ENCODE measurements at regions of chr10 and their contacts with region 1.

Region 1: DNA sequence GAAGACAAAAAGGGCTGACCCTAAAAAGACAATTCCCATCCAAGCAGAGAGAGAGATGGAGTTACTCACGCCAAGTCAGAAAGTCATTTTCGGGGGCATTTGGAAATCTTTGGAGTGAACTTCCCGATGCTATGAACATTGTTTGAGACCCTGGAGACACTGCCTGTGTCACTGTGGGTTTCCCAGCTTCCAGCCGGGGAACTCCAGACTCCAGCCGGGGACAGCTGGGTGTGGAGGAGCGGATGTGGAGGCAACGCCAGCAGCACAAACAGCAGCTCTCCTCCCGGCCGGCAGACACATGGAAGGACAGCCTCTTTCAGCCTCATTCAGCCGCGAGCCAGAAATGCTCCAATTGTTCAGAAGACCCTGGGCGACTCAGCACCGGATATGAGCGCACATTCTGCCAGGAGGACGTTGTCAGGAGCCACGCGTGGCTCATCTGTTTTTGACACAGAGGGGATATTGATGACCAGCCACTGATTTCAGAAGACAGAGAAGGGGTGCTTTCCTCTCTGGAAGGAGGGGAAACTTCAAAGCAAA is 97.6 kb downstream of the PRPF18 start:
- DNase-seq: peak; percentile 93
- H3K4me3 ChIP-seq: no peak overlapping the region
- H3K27ac ChIP-seq: peak overlapping the region; percentile 100
- H3K4me1 ChIP-seq: peaks cover 47% of the 10 kb centered on the region
- H3K27me3 ChIP-seq: no peaks in the 10 kb centered on the region
- CTCF ChIP-seq: no peak
- POLR2A ChIP-seq: no peak

Region 2: GRCh38 chr10:13707156-13707881 is 23.0 kb after region 1 on chr10:
- CTCF ChIA-PET with region 1: interaction called, 9 read pairs
- POLR2A ChIA-PET with region 1: interaction called, 7 read pairs
- dilution Hi-C with region 1: no loop called
- intact Hi-C with region 1: loop called (anchors 1 kb)
- DNase-seq: peak; percentile 91
- H3K4me3 ChIP-seq: peak overlapping the region in 2 of 3 experiments; percentile 22 to 62
- H3K27ac ChIP-seq: peak overlapping the region; percentile 37
- H3K4me1 ChIP-seq: peaks cover 70% of the 10 kb centered on the region
- H3K27me3 ChIP-seq: no peaks in the 10 kb centered on the region
- CTCF ChIP-seq: peak in 1 of 2 donors; percentile 22
- POLR2A ChIP-seq: peak; percentile 42

Region 3: GRCh38 chr10:13712837-13713581 is 28.7 kb after region 1 on chr10:
- CTCF ChIA-PET with region 1: interaction called, 9 read pairs
- POLR2A ChIA-PET with region 1: interaction called, 7 read pairs
- dilution Hi-C with region 1: no loop called
- intact Hi-C with region 1: loop called (anchors 1 kb)
- DNase-seq: peak; percentile 96
- H3K4me3 ChIP-seq: no peak overlapping the region
- H3K27ac ChIP-seq: peak overlapping the region; percentile 92
- H3K4me1 ChIP-seq: peaks cover 43% of the 10 kb centered on the region
- H3K27me3 ChIP-seq: no peaks in the 10 kb centered on the region
- CTCF ChIP-seq: no peak
- POLR2A ChIP-seq: peak; percentile 65

Region 4: GRCh38 chr10:13758312-13758711 is 74.0 kb after region 1 on chr10:
- CTCF ChIA-PET with region 1: no interaction called
- POLR2A ChIA-PET with region 1: no interaction called
- dilution Hi-C with region 1: no loop called
- intact Hi-C with region 1: loop called (anchors 1 kb)
- DNase-seq: peak; percentile 77
- H3K4me3 ChIP-seq: no peak overlapping the region
- H3K27ac ChIP-seq: peak overlapping the region; percentile 85
- H3K4me1 ChIP-seq: peaks cover 36% of the 10 kb centered on the region
- H3K27me3 ChIP-seq: no peaks in the 10 kb centered on the region
- CTCF ChIP-seq: no peak
- POLR2A ChIP-seq: no peak

Region 5: GRCh38 chr10:13776861-13777311 is 92.6 kb after region 1 on chr10:
- CTCF ChIA-PET with region 1: interaction called, 5 read pairs
- POLR2A ChIA-PET with region 1: no interaction called
- dilution Hi-C with region 1: no loop called
- intact Hi-C with region 1: loop called (anchors 1 kb)
- DNase-seq: no peak
- H3K4me3 ChIP-seq: no peak overlapping the region
- H3K27ac ChIP-seq: peak overlapping the region; percentile 76
- H3K4me1 ChIP-seq: peaks cover 46% of the 10 kb centered on the region
- H3K27me3 ChIP-seq: no peaks in the 10 kb centered on the region
- CTCF ChIP-seq: no peak
- POLR2A ChIP-seq: no peak